Activated T-helper 2 cell treated with anti-CD3 and anti-CD28 coated beads, Interferon-gamma antibody, Interleukin-2, Interleukin-4, amounts not matched to agents 10 μg/mL and 5 μg/mL and 100 μg/mL, durations not matched to agents 14 hours and 24 hours and 36 hours (primary cell): ENCODE measurements at regions of chrX and their contacts with region 1.

Region 1: DNA sequence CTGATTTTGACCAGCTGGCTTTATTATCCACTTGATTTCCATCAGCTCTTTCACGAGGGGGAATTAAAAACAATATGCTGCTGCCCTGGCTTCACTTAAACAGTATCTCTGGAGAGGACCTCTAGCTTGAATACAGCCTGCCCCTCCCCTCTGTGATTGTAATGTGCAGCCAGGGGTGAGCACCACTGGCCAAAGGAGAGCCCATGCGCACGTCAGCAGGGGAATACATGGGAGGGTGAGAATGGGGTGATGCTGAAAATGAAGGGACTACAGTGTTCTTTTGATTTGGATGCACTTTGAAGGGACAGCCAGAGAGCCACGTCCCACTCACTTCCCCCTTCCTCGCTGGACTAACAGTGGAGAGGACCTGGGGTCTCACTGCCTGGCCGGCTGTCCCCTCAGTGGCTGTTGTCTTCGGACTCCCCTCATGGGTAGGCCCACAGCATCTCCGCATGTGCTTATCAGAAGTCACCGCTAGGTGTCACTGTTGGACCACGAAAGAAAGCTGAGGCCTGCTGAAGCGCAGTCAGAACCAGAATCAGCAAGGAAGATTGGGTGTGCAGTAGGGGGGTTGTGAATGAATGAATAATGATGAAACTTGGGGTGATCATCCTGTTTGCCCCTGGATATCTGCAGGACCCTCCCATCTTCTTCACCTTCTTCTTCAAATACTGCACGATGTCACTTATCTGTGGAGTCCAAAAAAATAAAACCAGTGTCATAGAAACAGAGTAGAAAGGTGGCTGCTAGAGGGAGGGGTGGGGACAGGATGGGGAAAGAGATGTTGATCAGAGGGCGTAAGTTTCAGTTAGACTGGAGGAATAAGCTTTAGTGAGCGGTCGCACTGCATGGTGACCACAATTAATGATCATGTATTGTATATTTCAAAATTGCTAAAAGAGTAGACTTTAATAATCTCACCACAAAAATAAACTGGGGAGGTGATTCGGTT is 32.8 kb downstream of the CLCN4 start:
- DNase-seq: peak; percentile 44
- H3K4me3 Mint-ChIP-seq: no peak overlapping the region
- H3K27ac Mint-ChIP-seq: no peak overlapping the region
- H3K4me1 Mint-ChIP-seq: no peaks in the 10 kb centered on the region
- H3K27me3 Mint-ChIP-seq: peaks cover 4% of the 10 kb centered on the region

Region 2: DNA sequence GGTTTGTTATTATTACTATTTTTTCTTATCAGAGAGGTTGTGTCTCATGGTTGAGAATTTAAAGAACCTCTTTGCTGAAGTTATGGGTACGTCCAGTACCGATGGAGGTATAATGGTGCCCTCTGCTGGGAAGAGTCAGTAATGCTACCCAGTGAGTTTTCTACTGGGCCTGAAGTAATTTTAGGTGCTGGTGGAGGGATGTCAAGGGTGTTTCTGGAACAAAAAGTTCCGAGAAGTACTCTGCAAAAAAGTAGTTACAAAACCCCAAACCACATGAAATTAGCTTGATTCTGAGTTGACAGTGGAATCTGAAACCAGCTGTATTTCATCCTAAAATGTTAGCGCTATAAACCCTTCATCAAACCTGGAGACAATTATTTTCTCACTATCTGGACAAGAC is 533.3 kb after region 1 on chrX:
- intact Hi-C with region 1: loop called (anchors 1 kb)
- DNase-seq: no peak
- H3K4me3 Mint-ChIP-seq: no peak overlapping the region
- H3K27ac Mint-ChIP-seq: no peak overlapping the region
- H3K4me1 Mint-ChIP-seq: no peaks in the 10 kb centered on the region
- H3K27me3 Mint-ChIP-seq: no peaks in the 10 kb centered on the region

Region 3: GRCh38 chrX:10769195-10769594 is 579.6 kb after region 1 on chrX:
- intact Hi-C with region 1: loop called (anchors 2 kb)
- DNase-seq: no peak
- H3K4me3 Mint-ChIP-seq: no peak overlapping the region
- H3K27ac Mint-ChIP-seq: no peak overlapping the region
- H3K4me1 Mint-ChIP-seq: no peaks in the 10 kb centered on the region
- H3K27me3 Mint-ChIP-seq: no peaks in the 10 kb centered on the region

Region 4: GRCh38 chrX:11137543-11138139 is 948.0 kb after region 1 on chrX:
- intact Hi-C with region 1: loop called (anchors 2 kb)
- DNase-seq: no peak
- H3K4me3 Mint-ChIP-seq: no peak overlapping the region
- H3K27ac Mint-ChIP-seq: no peak overlapping the region
- H3K4me1 Mint-ChIP-seq: no peaks in the 10 kb centered on the region
- H3K27me3 Mint-ChIP-seq: peaks cover 5% of the 10 kb centered on the region